Endothelial cell of umbilical vein (primary cell): ENCODE measurements at regions of chr11 and their contacts with region 1.

Region 1: DNA sequence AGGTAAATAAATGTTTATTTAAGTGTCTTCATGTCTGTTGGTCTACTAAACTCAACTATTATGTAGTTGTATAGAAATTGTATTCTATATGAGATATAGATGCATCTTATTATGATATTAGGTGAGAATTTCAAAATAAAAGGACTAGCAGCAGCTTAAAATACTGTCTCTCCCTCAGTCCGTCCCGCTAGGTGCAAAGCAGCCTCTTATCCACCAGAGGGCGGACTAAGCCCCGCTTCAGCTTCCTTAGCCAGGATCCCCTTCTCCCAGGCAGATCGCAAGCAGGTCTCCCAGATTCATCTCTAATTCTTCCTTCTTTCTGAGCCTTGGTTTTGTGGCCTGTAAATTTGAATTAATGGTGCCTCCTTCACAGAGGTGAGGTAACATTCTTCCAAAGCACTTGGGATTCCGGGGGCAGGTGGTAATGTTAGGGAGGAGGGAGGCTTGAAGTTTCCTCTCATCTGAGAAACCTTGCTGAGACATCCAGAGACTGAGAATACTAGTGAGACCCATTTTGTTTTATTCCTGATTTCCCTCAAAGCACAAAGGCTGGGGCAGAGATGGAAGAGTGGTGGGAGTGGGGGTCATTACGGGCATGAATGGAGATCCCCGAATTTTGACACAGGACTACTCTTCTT is 13.5 kb upstream of the INSC start:
- DNase-seq: peak; percentile 63
- H3K4me3 ChIP-seq: no peak overlapping the region
- H3K27ac ChIP-seq: no peak overlapping the region
- H3K4me1 ChIP-seq: no peaks in the 10 kb centered on the region
- H3K27me3 ChIP-seq: peaks cover 4 to 5% of the 10 kb centered on the region in 2 experiments
- CTCF ChIP-seq: peak; percentile 78 to 90
- POLR2A ChIP-seq: no peak

Region 2: GRCh38 chr11:15113381-15113780 is 12.2 kb after region 1 on chr11:
- CTCF ChIA-PET with region 1: interaction called, 41 read pairs
- POLR2A ChIA-PET with region 1: no interaction called
- dilution Hi-C with region 1: no loop called
- intact Hi-C with region 1: no loop called
- DNase-seq: no peak
- H3K4me3 ChIP-seq: no peak overlapping the region
- H3K27ac ChIP-seq: no peak overlapping the region
- H3K4me1 ChIP-seq: no peaks in the 10 kb centered on the region
- H3K27me3 ChIP-seq: no peaks in the 10 kb centered on the region
- CTCF ChIP-seq: no peak
- POLR2A ChIP-seq: no peak

Region 3: DNA sequence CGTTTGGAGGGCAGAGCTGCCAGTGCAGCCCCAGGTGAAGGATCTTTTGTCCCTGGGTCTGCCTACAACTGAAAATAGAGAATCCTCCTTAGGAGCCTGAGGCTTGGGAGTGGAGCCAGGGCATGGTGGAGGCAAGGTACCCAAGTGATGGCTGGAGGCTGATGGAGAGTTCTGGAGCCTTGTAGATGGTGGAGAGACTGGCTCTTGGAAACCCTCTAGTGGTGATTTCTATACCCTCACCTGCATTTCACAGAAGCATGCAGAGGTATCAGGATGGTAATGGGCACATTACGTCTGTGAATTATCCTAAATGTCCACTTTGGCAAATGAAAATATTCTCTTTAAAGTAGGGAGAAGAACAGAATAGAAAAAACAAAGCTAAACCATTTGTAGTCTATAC is 57.9 kb after region 1 on chr11:
- CTCF ChIA-PET with region 1: interaction called, 16 read pairs
- POLR2A ChIA-PET with region 1: no interaction called
- dilution Hi-C with region 1: no loop called
- intact Hi-C with region 1: loop called (anchors 1 kb)
- DNase-seq: no peak
- H3K4me3 ChIP-seq: no peak overlapping the region
- H3K27ac ChIP-seq: no peak overlapping the region
- H3K4me1 ChIP-seq: no peaks in the 10 kb centered on the region
- H3K27me3 ChIP-seq: no peaks in the 10 kb centered on the region
- CTCF ChIP-seq: peak in 1 of 2 donors; percentile 8
- POLR2A ChIP-seq: no peak

Region 4: DNA sequence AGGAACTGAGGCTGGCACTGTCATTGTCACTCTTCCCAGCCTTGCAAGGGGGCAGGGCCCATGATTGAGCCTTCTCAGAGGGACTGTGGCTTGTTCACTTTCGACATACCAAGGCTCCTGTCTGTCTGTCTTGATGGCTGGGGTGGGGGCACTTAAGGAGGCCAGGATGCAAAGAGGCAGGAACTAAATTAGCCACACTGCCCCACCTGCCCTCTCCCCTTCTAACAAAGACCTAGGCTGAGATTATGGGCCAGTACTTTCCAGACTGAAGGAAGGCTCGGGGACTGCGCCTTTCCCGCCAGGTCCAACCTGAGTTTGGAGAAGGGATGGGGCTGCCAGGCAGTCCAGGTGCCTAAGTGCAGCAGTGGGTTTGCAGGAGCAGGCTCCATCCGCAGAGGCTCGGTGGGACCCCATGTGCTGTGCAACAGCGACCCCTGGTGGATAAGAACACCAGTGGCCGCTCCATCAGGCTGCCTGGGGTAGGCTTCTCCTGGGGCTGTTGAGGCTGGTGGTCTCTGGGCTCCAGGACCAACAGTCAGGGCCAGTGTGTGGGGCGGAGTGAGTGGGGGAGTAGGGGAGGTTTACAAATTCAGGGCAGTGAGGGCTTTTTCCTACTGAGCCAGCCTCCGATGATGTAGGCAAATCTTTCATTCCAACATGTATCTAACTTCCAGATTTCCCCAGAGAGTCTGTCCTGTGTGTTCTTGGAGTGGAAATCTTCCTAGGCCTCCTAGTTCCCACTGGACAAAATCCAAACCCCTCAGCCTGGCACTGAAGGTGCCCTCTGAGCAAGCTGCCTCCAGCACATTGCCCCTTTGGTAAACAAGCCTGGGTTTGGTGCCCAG is 107.4 kb after region 1 on chr11:
- CTCF ChIA-PET with region 1: interaction called, 65 read pairs
- POLR2A ChIA-PET with region 1: no interaction called
- dilution Hi-C with region 1: no loop called
- intact Hi-C with region 1: loop called (anchors 1 kb)
- DNase-seq: peak; percentile 34
- H3K4me3 ChIP-seq: no peak overlapping the region
- H3K27ac ChIP-seq: no peak overlapping the region
- H3K4me1 ChIP-seq: no peaks in the 10 kb centered on the region
- H3K27me3 ChIP-seq: no peaks in the 10 kb centered on the region
- CTCF ChIP-seq: peak; percentile 65 to 92
- POLR2A ChIP-seq: no peak

Region 5: DNA sequence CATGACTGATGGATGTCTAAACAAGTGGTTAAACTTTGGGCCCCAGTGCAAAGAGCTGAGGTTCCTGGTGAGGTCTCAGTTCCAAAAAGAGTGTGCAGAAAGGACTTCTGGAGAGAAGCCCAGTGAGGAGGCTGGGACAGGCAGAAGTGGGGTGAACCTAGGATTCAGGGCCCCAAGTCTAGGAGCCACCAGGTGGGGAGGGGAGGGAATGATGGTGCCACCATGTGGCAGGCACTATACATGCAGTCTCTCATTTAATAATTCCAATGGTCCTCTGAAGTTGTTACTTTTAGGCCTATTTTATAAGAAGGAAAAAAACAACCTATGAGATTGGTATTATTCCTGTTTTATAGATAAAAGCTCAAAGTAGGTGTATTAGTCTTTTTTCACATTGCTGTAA is 115.5 kb after region 1 on chr11:
- CTCF ChIA-PET with region 1: interaction called, 10 read pairs
- POLR2A ChIA-PET with region 1: no interaction called
- dilution Hi-C with region 1: no loop called
- intact Hi-C with region 1: no loop called
- DNase-seq: no peak
- H3K4me3 ChIP-seq: no peak overlapping the region
- H3K27ac ChIP-seq: no peak overlapping the region
- H3K4me1 ChIP-seq: no peaks in the 10 kb centered on the region
- H3K27me3 ChIP-seq: no peaks in the 10 kb centered on the region
- CTCF ChIP-seq: no peak
- POLR2A ChIP-seq: no peak